IMR-90 (cell line): ENCODE measurements at regions of chr7 and their contacts with region 1.

Region 1: GRCh38 chr7:26182706-26183105 is 17.8 kb downstream of the HNRNPA2B1 start:
- DNase-seq: no peak
- ATAC-seq: peak; percentile 7; the same call in 1 of the 2 replicates
- H3K4me3 ChIP-seq: no peak overlapping the region
- H3K27ac ChIP-seq: no peak overlapping the region
- H3K4me1 ChIP-seq: no peaks in the 10 kb centered on the region
- H3K27me3 ChIP-seq: no peaks in the 10 kb centered on the region
- CTCF ChIP-seq: no peak
- POLR2A ChIP-seq: no peak; the same call in none of the 2 replicates
- RAD21 ChIP-seq: no peak

Region 2: GRCh38 chr7:26090927-26091519 is 91.7 kb before region 1 on chr7:
- CTCF ChIA-PET with region 1: interaction called, 5 read pairs
- POLR2A ChIA-PET with region 1: no interaction called
- dilution Hi-C with region 1: no loop called
- in situ Hi-C with region 1: no loop called
- intact Hi-C with region 1: loop called (anchors 5 kb)
- DNase-seq: peak; percentile 74
- ATAC-seq: peak; percentile 89
- H3K4me3 ChIP-seq: no peak overlapping the region
- H3K27ac ChIP-seq: no peak overlapping the region
- H3K4me1 ChIP-seq: no peaks in the 10 kb centered on the region
- H3K27me3 ChIP-seq: peaks cover 11% of the 10 kb centered on the region
- CTCF ChIP-seq: peak; percentile 76
- POLR2A ChIP-seq: no peak
- RAD21 ChIP-seq: peak; percentile 80

Region 3: DNA sequence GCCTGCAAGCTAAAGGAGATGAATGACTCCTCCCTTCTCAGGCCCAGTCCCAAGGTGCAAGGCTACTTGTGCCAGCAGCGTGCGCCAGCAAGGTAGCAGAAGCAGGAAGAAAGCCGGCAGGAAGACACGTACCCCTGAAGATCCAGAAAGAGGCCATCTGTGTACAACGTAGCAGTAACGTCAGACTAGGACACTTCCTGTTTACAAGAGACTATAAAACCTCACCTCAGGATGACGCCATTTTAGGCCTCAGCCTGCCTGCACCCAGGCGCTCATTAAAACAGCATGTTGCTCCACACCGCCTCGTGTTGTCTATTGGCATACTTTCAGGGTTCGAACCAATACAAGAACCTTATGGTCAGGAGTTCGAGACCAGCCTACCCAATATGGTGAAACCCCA is 67.5 kb after region 1 on chr7:
- CTCF ChIA-PET with region 1: no interaction called
- POLR2A ChIA-PET with region 1: no interaction called
- dilution Hi-C with region 1: no loop called
- in situ Hi-C with region 1: no loop called
- intact Hi-C with region 1: no loop called
- DNase-seq: no peak
- ATAC-seq: no peak
- H3K4me3 ChIP-seq: no peak overlapping the region
- H3K27ac ChIP-seq: no peak overlapping the region
- H3K4me1 ChIP-seq: no peaks in the 10 kb centered on the region
- H3K27me3 ChIP-seq: no peaks in the 10 kb centered on the region
- CTCF ChIP-seq: no peak
- POLR2A ChIP-seq: no peak
- RAD21 ChIP-seq: no peak